A549 (cell line): ENCODE measurements at regions of chr7 and their contacts with region 1.

Region 1: DNA sequence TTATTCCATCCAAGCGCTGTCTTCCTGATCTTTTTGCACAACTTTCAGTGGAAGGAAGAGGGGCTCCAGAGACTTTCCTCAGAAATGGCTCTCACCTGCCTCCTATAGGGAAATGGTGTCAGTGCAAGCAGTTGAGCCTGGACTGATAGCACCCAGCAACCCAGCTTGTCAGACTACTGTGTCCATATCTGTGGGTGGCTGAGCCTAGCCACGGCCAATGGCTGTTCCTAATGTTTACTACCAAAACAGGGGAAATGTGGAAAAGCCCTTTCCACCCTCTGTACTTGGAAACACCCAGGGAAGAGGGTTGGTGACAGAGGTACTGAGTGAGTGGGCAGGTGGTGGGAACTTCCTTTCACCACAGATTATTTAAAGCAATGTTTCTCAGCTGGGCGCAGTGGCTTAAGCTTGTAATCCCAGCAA is 4.3 kb upstream of the YKT6 start:
- DNase-seq: peak; percentile 50 to 76
- ATAC-seq: peak; percentile 74 to 75; a peak in 5 of 6 replicates
- H3K4me3 ChIP-seq: no peak overlapping the region
- H3K27ac ChIP-seq: no peak overlapping the region
- H3K4me1 ChIP-seq: no peaks in the 10 kb centered on the region
- CTCF ChIP-seq: peak; percentile 63
- EP300 ChIP-seq: no peak
- POLR2A ChIP-seq: no peak
- RAD21 ChIP-seq: peak; percentile 75 to 86

Region 2: GRCh38 chr7:44072364-44073231 is 123.9 kb before region 1 on chr7:
- CTCF ChIA-PET with region 1: interaction called, 35 read pairs
- POLR2A ChIA-PET with region 1: interaction called, 5 read pairs
- DNase-seq: peak; percentile 70 to 78
- ATAC-seq: peak; percentile 81 to 90
- H3K4me3 ChIP-seq: no peak overlapping the region
- H3K27ac ChIP-seq: peak overlapping the region in 1 of 2 experiments; percentile 51; a peak in 1 of 6 replicates
- H3K4me1 ChIP-seq: peaks cover 16% of the 10 kb centered on the region
- CTCF ChIP-seq: peak; percentile 68
- EP300 ChIP-seq: no peak
- POLR2A ChIP-seq: no peak
- RAD21 ChIP-seq: peak; percentile 63 to 71

Region 3: DNA sequence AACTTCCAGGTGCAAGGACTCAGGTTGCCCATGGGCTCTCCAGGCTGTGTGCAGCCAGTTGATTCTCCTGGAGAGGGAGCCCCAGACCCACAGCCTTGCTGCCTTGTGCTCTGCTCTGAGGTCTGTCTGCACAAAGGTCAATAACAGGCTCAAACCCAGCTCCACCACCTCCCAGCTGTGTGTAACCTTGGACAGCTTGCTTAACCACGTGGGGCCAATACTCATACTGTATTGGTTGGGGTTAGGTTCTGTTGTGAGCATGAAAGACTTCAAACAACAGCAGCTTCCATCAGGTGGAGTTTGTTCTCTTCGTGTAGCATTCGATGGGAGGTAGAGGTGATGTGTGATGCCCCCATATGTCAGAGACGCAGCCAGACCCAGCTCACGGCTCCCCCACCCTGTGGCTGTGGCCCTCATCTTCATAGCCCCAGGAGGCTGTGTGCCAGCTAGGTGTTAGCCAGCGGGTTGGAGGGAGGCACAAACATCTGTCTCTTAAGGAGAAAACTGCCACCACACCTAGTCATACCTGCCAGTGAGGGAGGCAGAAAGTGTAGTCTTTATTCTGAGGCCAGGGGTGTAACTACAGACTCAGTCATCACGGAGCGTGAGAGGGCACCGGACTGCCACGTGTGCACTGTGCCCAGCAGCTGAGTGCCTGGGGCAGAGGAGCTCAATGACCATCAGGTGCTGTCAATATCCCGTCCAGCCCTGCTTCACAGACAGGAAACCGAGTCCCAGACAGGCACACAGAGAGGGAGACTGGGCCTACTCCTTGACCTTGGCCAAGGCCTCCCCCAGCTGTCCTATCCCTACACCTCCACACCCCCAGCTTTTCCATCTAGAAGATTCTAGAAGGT is 65.1 kb before region 1 on chr7:
- CTCF ChIA-PET with region 1: interaction called, 52 read pairs
- POLR2A ChIA-PET with region 1: no interaction called
- DNase-seq: peak in 1 of 2 experiments; percentile 40
- ATAC-seq: peak; percentile 80 to 90
- H3K4me3 ChIP-seq: no peak overlapping the region
- H3K27ac ChIP-seq: no peak overlapping the region
- H3K4me1 ChIP-seq: no peaks in the 10 kb centered on the region
- CTCF ChIP-seq: peak; percentile 39
- EP300 ChIP-seq: no peak
- POLR2A ChIP-seq: no peak
- RAD21 ChIP-seq: peak; percentile 46 to 67; a peak in 3 of 5 replicates

Region 4: DNA sequence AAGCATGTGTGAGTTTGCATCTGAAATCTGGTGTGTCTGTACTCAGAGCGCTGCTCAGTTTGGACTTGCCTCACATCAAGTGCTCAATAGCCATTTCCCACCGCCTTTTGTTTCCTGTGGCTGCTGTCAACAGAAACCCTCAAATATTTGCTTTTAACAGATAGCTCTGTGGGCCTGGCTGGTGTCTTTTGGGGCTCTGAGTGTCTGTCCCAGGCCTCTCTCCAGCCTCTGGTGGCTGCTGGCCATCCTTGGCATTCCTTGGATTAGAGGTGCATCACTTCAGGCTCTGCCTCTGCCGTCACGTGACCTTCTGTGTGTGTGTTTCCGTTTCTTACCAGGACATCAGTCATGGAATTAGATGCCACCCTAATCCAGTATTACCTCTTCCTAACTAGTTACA is 13.6 kb after region 1 on chr7:
- CTCF ChIA-PET with region 1: interaction called, 12 read pairs
- POLR2A ChIA-PET with region 1: interaction called, 4 read pairs
- DNase-seq: no peak
- ATAC-seq: no peak
- H3K4me3 ChIP-seq: no peak overlapping the region
- H3K27ac ChIP-seq: no peak overlapping the region
- H3K4me1 ChIP-seq: no peaks in the 10 kb centered on the region
- CTCF ChIP-seq: no peak
- EP300 ChIP-seq: no peak
- POLR2A ChIP-seq: no peak
- RAD21 ChIP-seq: no peak

Region 5: DNA sequence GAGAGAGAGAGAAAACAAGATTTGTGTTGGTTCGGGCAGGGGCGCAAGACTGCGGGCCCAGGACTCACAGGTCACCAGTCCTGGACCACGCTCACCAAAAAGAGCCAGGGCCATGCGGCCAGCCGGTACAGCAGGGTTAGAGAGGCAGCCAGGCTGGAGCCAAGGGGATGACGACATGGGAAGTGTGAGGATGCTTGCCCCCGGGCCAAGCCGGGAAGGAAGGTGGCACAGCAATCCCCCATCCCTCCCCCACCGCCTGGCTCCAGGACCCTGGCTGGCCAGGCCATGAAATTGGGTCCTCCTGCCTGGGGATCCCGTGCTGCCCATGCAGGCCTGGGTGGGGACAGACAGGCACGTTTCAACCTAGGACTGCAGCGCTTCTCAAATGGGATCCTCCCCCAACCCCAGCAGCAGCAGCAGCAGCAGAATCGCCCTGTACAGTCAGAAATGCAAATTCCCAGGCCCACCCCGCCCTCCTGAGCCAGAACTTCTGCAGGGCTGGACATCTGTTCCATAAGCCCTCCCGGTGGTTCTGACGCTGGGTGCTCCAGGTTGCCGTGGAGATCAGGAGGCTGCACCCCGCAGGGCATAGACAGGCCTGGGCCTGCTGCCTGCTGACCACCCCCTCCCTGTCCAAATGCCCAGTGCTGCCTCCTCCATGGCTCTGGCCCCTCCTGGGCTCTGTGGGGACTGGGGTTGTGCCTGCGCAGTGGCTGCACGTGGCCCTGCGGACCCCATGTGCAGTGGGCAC is 39.3 kb after region 1 on chr7:
- CTCF ChIA-PET with region 1: no interaction called
- POLR2A ChIA-PET with region 1: no interaction called
- DNase-seq: no peak
- ATAC-seq: no peak
- H3K4me3 ChIP-seq: no peak overlapping the region
- H3K27ac ChIP-seq: no peak overlapping the region
- H3K4me1 ChIP-seq: no peaks in the 10 kb centered on the region
- CTCF ChIP-seq: no peak
- EP300 ChIP-seq: no peak
- POLR2A ChIP-seq: no peak
- RAD21 ChIP-seq: no peak